OCI-LY7 (cell line): ENCODE measurements at regions of chr4 and their contacts with region 1.

Region 1: GRCh38 chr4:121192480-121192879 is 28.4 kb upstream of the TNIP3 start:
- DNase-seq: peak; percentile 54
- H3K4me3 ChIP-seq: no peak overlapping the region
- H3K27ac ChIP-seq: no peak overlapping the region
- H3K4me1 ChIP-seq: no peaks in the 10 kb centered on the region
- CTCF ChIP-seq: peak; percentile 92

Region 2: DNA sequence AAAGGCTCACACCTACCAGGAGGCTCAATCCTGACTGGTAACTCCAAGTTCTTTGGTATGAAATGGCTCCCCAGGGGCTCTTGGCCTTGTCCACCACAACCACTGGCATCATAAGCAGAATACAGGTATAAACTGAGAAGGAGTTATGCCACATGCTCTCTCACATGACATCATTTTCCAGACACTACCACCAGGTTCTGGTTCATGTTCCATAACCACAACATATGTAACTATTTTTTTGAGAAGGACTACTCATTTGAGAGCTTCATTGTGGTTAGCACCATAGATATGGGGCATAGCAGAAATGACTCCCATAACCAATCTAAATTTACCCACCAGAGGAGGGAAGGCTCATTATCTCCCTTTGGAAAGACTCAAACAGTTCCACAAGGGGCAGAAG is 289.6 kb before region 1 on chr4:
- CTCF ChIA-PET with region 1: no interaction called
- POLR2A ChIA-PET with region 1: no interaction called
- intact Hi-C with region 1: no loop called
- DNase-seq: no peak
- H3K4me3 ChIP-seq: no peak overlapping the region
- H3K27ac ChIP-seq: no peak overlapping the region
- H3K4me1 ChIP-seq: no peaks in the 10 kb centered on the region
- CTCF ChIP-seq: no peak

Region 3: DNA sequence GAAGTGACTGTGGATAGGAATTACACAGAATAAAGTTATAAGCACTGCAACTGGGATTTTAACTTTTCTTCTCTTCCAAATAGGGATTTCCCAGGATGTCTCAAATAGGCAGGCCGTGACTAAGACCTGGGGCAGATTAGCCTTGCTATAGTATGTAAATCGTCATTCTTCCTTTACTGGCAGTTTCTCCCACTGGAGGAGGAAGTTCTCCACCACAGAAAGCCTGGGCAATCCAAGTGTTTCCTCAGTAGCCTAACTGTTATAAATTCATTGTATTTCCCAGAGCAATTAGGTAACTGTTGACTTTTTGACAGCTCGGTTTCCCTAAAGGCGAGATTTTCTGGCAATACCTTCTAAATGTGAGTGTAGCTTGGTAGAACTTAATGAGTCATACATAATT is 28.2 kb before region 1 on chr4 and contains the start of gene TNIP3:
- CTCF ChIA-PET with region 1: no interaction called
- POLR2A ChIA-PET with region 1: no interaction called
- intact Hi-C with region 1: no loop called
- DNase-seq: no peak
- H3K4me3 ChIP-seq: no peak within 1 kb of the TSS
- H3K27ac ChIP-seq: no peak within 1 kb of the TSS
- H3K4me1 ChIP-seq: no peaks in the 10 kb centered on the region
- CTCF ChIP-seq: no peak
- total RNA-seq, gene TNIP3: 1.0 TPM in 1 of 2 replicates, not detected in the other

Region 4: GRCh38 chr4:121252224-121252806 is 59.8 kb after region 1 on chr4:
- CTCF ChIA-PET with region 1: no interaction called
- POLR2A ChIA-PET with region 1: interaction called, 4 read pairs
- intact Hi-C with region 1: loop called (anchors 1 kb)
- DNase-seq: peak; percentile 59
- H3K4me3 ChIP-seq: no peak overlapping the region
- H3K27ac ChIP-seq: no peak overlapping the region
- H3K4me1 ChIP-seq: no peaks in the 10 kb centered on the region
- CTCF ChIP-seq: peak; percentile 95